Right ventricle myocardium superior (tissue), 1 donor: ENCODE measurements at regions of chr4 and their contacts with region 1.

Region 1: DNA sequence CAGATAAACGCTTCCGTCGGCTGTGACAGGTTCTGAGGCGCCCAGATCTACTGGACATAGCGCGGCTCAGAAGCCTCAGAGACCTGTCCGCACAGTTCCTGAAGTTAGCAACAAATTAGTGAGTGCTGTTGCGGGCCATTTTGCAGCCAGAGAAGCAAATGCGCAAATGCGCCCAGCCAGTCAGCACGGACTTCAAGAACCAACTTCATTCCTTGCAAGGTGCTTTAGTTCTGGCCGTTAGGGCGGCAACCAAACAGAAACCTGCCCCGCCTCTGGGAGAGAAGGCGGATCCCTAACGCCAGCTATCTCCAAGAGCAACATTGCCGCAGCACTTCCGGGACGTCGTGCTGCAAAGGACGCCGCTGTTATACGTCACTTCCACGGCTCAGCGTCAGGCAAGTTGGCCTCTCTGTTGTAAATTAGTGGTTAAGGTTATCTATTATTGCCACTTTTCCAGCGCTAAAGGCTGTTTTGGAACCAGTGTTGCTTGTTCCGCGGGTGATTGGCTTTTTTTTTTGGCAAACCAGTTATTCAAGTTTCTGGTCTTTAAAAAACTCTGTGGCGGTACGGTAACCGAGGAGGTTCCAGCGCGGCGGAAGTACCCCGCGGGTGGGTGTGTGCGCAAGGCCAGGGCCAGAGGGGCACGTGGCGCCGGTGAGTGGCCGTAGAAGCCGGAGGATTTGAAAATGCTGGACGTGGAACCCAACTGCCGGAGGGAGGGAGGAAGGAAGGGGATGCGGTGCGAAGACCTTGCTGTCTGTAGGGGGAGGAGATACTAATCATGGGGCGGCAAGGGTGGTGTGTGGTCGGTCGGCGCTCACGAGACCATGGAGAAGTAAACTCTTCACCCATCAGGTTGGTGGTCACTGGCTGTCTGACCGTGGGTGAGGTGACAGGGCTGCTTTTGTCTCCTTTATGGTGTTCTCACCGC is at the start of gene GAR1:
- DNase-seq: peak; percentile 94
- ATAC-seq: peak; percentile 100
- total RNA-seq, gene GAR1: 7.7 TPM

Region 2: DNA sequence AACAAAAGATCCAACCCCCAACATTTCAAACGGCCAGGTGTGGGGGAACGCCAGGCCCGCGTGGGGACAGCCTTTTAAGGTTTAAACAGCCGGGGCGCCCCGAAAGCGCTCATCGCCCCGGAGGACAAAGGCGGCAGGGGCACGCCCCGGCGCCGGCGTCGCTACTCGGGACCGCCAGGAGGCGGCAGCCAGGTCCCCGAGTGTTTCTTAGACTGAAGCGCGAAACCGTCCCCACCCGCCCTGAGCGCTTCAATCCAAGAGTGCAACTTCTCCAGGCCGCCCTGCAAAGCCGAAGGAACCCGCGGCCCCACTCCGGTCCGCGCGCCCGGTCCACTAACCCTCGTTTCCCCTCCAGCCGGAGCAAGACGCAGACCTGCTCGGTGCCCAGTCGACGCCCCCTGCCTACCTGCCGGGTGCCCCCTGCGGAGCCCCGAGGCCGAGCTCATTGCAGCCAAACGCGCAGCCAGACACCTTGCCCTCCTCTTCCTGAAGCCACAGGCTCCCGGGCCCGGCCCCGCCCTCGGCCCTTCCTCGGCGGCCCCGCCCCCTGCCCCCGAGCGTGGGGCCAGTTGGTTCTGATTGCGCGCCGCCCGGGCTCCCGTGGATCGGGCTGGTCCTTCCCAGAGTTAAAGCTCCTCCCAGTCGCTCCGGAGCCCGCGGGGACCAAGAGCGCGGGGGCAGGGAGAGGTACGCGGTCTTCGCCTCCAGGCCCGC is 112.3 kb before region 1 on chr4 and contains the start of gene CASP6:
- intact Hi-C with region 1: loop called (anchors 5 kb)
- DNase-seq: peak; percentile 93
- ATAC-seq: peak; percentile 98
- total RNA-seq, gene CASP6: 7.0 TPM